T-cell (primary cell): ENCODE measurements at regions of chr12 and their contacts with region 1.

Region 1: DNA sequence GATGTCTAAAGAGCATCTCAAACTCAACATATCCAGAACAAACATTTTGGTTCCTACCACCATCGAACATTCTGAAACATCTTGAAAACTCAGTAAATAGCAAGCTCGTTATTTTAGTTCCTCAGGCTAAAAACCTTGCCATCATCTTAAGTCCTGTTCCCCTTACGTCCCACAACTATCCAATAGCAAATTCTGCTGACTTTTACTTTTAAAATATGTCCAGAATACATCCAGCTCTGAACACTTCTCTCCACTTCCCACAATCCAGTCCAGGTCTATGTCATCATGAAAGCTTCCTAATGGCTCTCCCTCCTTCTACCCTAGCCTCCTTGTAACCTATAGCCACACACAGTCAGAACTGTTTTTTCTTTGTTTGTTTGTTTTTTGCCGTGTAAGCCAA is 279.9 kb downstream of the IPO8 start:
- DNase-seq: no peak
- ATAC-seq: no peak
- H3K4me3 ChIP-seq: no peak overlapping the region
- H3K4me3 Mint-ChIP-seq: no peak overlapping the region
- H3K27ac ChIP-seq: no peak overlapping the region
- H3K27ac Mint-ChIP-seq: no peak overlapping the region
- H3K4me1 ChIP-seq: no peaks in the 10 kb centered on the region
- H3K4me1 Mint-ChIP-seq: no peaks in the 10 kb centered on the region
- H3K27me3 ChIP-seq: no peaks in the 10 kb centered on the region
- H3K27me3 Mint-ChIP-seq: peaks cover 0 to 2% of the 10 kb centered on the region in 2 donors

Region 2: DNA sequence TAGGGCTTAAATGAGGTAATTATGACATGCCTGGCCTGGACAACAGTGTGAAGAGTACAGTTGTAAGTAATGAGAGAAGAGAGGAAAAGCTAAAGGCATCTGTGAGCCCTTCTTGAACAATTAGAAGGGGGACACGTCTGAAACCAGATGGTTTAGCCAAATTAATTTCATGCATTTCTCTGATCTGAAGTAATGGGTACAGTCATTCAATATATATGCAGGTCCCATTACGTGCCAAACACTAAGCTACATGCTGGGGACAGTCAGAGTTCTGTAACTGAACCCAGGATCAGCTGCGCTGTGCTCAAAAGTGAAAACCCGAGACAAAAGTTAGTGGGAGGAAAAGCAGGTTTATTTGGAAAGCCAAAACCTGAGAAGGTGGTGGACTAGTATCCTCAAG is 424.8 kb before region 1 on chr12:
- CTCF ChIA-PET with region 1: no interaction called
- POLR2A ChIA-PET with region 1: interaction called in 1 of 2 experiments, 10 read pairs
- DNase-seq: no peak
- ATAC-seq: no peak
- H3K4me3 ChIP-seq: no peak overlapping the region
- H3K4me3 Mint-ChIP-seq: no peak overlapping the region
- H3K27ac ChIP-seq: no peak overlapping the region
- H3K27ac Mint-ChIP-seq: no peak overlapping the region
- H3K4me1 ChIP-seq: no peaks in the 10 kb centered on the region
- H3K4me1 Mint-ChIP-seq: no peaks in the 10 kb centered on the region
- H3K27me3 ChIP-seq: no peaks in the 10 kb centered on the region
- H3K27me3 Mint-ChIP-seq: no peaks in the 10 kb centered on the region